Endothelial cell of umbilical vein (primary cell): ENCODE measurements at regions of chr5 and their contacts with region 1.

Region 1: DNA sequence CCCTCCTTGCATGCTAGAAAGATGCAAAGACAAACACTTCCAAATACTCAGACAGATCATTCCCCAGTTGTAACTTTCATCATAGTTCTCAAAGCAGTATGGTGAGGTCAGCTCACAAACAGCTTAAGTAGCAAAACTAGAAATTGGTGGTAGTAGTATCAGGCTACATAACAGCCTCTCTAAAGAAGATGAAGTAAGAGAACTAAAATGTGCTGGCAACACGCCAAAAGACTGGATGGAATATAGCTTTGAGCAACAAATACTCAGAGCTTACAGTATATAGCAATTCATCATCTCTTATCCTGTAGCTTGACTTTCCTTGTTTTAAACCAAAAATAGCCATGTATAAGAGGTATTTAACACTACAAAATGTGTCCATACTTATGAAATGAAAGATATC is 7.5 kb downstream of the PFDN1 start:
- DNase-seq: peak; percentile 96
- H3K4me3 ChIP-seq: no peak overlapping the region
- H3K27ac ChIP-seq: peak overlapping the region; percentile 85
- H3K4me1 ChIP-seq: peaks cover 77% of the 10 kb centered on the region
- H3K27me3 ChIP-seq: no peaks in the 10 kb centered on the region
- CTCF ChIP-seq: no peak
- POLR2A ChIP-seq: no peak

Region 2: DNA sequence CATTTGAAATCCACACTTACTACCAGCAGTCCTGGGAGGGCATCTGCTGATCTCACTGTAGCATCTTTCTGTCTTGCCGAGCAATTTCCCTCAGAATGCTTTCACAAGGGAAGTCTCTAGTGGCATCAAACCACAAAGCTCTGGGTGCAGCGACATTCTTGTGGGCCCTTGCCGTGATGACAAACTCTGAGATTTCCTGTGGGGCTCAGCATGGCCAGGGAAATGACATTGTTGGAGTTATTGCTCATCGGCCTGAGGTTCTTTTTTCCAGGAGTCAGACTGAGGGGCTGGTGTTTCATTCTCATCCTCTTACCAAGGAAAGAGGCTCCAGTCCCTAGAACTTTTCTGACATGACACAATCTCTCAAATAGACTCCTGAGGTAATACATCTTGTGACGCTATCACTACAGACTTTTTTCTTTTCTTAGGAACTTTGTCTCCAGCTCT is 43.9 kb before region 1 on chr5:
- CTCF ChIA-PET with region 1: interaction called, 11 read pairs
- POLR2A ChIA-PET with region 1: no interaction called
- dilution Hi-C with region 1: no loop called
- intact Hi-C with region 1: loop called (anchors 1 kb)
- DNase-seq: peak; percentile 89
- H3K4me3 ChIP-seq: peak overlapping the region in 1 of 3 experiments; percentile 32
- H3K27ac ChIP-seq: peak overlapping the region; percentile 97
- H3K4me1 ChIP-seq: peaks cover 61% of the 10 kb centered on the region
- H3K27me3 ChIP-seq: no peaks in the 10 kb centered on the region
- CTCF ChIP-seq: no peak
- POLR2A ChIP-seq: peak; percentile 67

Region 3: GRCh38 chr5:140261403-140262171 is 33.8 kb before region 1 on chr5:
- CTCF ChIA-PET with region 1: interaction called, 16 read pairs
- POLR2A ChIA-PET with region 1: no interaction called
- dilution Hi-C with region 1: no loop called
- intact Hi-C with region 1: loop called (anchors 1 kb)
- DNase-seq: peak; percentile 97
- H3K4me3 ChIP-seq: peak overlapping the region in 1 of 3 experiments; percentile 23
- H3K27ac ChIP-seq: peak overlapping the region; percentile 84
- H3K4me1 ChIP-seq: peaks cover 30% of the 10 kb centered on the region
- H3K27me3 ChIP-seq: no peaks in the 10 kb centered on the region
- CTCF ChIP-seq: no peak
- POLR2A ChIP-seq: peak; percentile 53

Region 4: GRCh38 chr5:140267559-140268018 is 27.8 kb before region 1 on chr5:
- CTCF ChIA-PET with region 1: interaction called, 3 read pairs
- POLR2A ChIA-PET with region 1: interaction called, 3 read pairs
- dilution Hi-C with region 1: no loop called
- intact Hi-C with region 1: loop called (anchors 2 kb)
- DNase-seq: peak; percentile 92
- H3K4me3 ChIP-seq: peak overlapping the region in 1 of 3 experiments; percentile 37
- H3K27ac ChIP-seq: peak overlapping the region; percentile 84
- H3K4me1 ChIP-seq: peaks cover 24% of the 10 kb centered on the region
- H3K27me3 ChIP-seq: no peaks in the 10 kb centered on the region
- CTCF ChIP-seq: no peak
- POLR2A ChIP-seq: no peak

Region 5: GRCh38 chr5:140284013-140284412 is 11.4 kb before region 1 on chr5:
- CTCF ChIA-PET with region 1: interaction called, 4 read pairs
- POLR2A ChIA-PET with region 1: no interaction called
- dilution Hi-C with region 1: no loop called
- intact Hi-C with region 1: loop called (anchors 1 kb)
- DNase-seq: no peak
- H3K4me3 ChIP-seq: no peak overlapping the region
- H3K27ac ChIP-seq: no peak overlapping the region
- H3K4me1 ChIP-seq: peaks cover 4% of the 10 kb centered on the region
- H3K27me3 ChIP-seq: no peaks in the 10 kb centered on the region
- CTCF ChIP-seq: no peak
- POLR2A ChIP-seq: no peak

Region 6: DNA sequence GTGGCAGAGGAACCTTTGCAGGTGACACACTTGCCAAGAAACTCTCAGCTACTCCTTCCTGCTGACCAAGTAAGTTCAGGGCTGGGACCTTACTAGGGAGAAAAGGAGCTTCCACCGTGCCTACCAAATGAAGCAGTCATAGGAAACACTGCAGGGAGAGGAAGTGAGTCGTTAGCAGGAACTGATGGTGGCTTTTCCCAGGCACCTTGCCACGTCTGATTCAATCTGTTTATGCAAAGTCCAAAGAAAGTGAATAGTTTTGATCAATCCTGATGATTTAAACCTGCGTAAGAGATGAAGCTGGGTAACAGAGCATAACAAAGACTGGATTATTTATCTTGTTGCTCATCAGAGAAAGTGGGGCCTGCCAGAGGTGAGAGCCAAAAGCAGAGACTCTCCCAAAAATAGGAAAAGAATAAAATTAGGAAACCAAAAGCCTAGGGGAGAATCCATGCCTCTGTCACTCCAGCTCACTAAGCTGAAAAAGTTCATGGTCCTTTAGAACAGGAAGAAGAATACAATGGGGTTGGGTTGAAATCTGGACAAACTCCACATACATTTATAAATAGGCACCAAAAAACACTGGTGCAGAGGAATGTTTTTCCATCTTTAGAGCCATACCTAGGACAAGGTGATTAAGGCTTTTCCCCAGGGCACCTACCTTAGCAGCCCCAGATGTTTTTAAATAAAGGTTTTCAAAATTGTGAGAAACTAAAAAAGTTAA is 16.8 kb after region 1 on chr5:
- CTCF ChIA-PET with region 1: interaction called, 11 read pairs
- POLR2A ChIA-PET with region 1: interaction called, 4 read pairs
- dilution Hi-C with region 1: no loop called
- intact Hi-C with region 1: loop called (anchors 1 kb)
- DNase-seq: peak; percentile 99
- H3K4me3 ChIP-seq: peak overlapping the region in 2 of 3 experiments; percentile 10 to 18
- H3K27ac ChIP-seq: peak overlapping the region; percentile 98
- H3K4me1 ChIP-seq: peaks cover 40% of the 10 kb centered on the region
- H3K27me3 ChIP-seq: no peaks in the 10 kb centered on the region
- CTCF ChIP-seq: no peak
- POLR2A ChIP-seq: peak; percentile 65

Region 7: GRCh38 chr5:140322751-140323731 is 27.6 kb after region 1 on chr5:
- CTCF ChIA-PET with region 1: interaction called, 8 read pairs
- POLR2A ChIA-PET with region 1: interaction called, 5 read pairs
- dilution Hi-C with region 1: no loop called
- intact Hi-C with region 1: loop called (anchors 2 kb)
- DNase-seq: peak; percentile 94
- H3K4me3 ChIP-seq: no peak overlapping the region
- H3K27ac ChIP-seq: peak overlapping the region; percentile 99
- H3K4me1 ChIP-seq: peaks cover 55% of the 10 kb centered on the region
- H3K27me3 ChIP-seq: no peaks in the 10 kb centered on the region
- CTCF ChIP-seq: no peak
- POLR2A ChIP-seq: no peak

Region 8: DNA sequence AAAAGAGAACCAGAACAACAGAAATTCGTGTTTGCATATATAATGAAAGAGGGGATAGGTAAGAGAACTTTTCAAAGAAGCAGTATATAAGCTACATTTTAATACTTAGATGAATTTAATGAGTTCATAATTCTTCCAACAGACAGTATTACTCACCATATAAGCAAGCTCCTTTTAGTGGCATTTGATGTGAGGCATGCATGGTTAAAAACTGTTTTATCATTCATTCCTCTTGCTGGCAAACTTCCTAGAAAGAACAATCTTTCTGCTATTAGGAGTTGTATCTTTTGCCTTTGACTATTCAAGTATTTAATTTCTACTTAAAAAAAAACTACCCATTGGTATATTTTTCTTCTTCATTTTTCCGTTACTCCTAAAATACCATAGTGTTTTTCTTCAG is 186.3 kb after region 1 on chr5:
- CTCF ChIA-PET with region 1: no interaction called
- POLR2A ChIA-PET with region 1: no interaction called
- dilution Hi-C with region 1: no loop called
- intact Hi-C with region 1: no loop called
- DNase-seq: no peak
- H3K4me3 ChIP-seq: no peak overlapping the region
- H3K27ac ChIP-seq: no peak overlapping the region
- H3K4me1 ChIP-seq: peaks cover 26% of the 10 kb centered on the region
- H3K27me3 ChIP-seq: no peaks in the 10 kb centered on the region
- CTCF ChIP-seq: no peak
- POLR2A ChIP-seq: no peak